PC-9 (cell line): ENCODE measurements at regions of chr6 and their contacts with region 1.

Region 1: GRCh38 chr6:57316581-57317059 is 810 bp upstream of the PRIM2 start:
- DNase-seq: peak; percentile 84 to 85
- H3K4me3 ChIP-seq: peak overlapping the region; percentile 90
- H3K27ac ChIP-seq: no peak overlapping the region
- H3K4me1 ChIP-seq: peaks cover 22% of the 10 kb centered on the region
- H3K27me3 ChIP-seq: no peaks in the 10 kb centered on the region
- CTCF ChIP-seq: peak; percentile 92

Region 2: GRCh38 chr6:56359201-56359899 is 957.3 kb before region 1 on chr6:
- CTCF ChIA-PET with region 1: no interaction called
- POLR2A ChIA-PET with region 1: no interaction called
- intact Hi-C with region 1: loop called (anchors 2 kb)
- DNase-seq: peak; percentile 41 to 51
- H3K4me3 ChIP-seq: no peak overlapping the region
- H3K27ac ChIP-seq: no peak overlapping the region
- H3K4me1 ChIP-seq: 0 out of 2 replicates have a peak, but pooled peaks cover 2% of the 10 kb centered on the region
- H3K27me3 ChIP-seq: no peaks in the 10 kb centered on the region
- CTCF ChIP-seq: peak; percentile 88

Region 3: DNA sequence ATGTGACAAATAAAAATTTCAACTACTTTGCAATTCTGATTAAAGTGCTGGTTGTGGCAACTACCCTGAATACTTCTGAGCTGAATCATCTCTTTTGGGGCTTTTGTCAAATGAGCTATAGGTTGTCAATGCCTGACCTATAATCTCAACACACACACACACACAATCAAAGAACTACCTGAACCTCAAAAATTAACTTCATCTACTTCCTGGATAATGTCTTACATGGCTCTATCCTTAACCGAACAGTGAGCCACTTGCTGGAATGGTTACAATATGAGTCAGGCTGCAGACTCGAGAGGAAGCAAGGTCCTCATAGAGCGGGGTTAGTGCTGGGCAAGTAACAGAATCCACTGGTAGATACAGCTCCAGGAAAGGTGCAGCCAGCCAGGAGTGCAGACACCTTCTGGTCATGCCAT is 603.4 kb before region 1 on chr6:
- CTCF ChIA-PET with region 1: no interaction called
- POLR2A ChIA-PET with region 1: no interaction called
- intact Hi-C with region 1: loop called (anchors 10 kb)
- DNase-seq: peak; percentile 68 to 97
- H3K4me3 ChIP-seq: peak overlapping the region; percentile 37; the same call in 1 of the 2 replicates
- H3K27ac ChIP-seq: peak overlapping the region; percentile 85
- H3K4me1 ChIP-seq: peaks cover 67% of the 10 kb centered on the region
- H3K27me3 ChIP-seq: no peaks in the 10 kb centered on the region
- CTCF ChIP-seq: no peak

Region 4: GRCh38 chr6:56902641-56903464 is 413.8 kb before region 1 on chr6:
- CTCF ChIA-PET with region 1: interaction called, 11 read pairs
- POLR2A ChIA-PET with region 1: no interaction called
- intact Hi-C with region 1: loop called (anchors 1 kb)
- DNase-seq: no peak
- H3K4me3 ChIP-seq: no peak overlapping the region
- H3K27ac ChIP-seq: no peak overlapping the region
- H3K4me1 ChIP-seq: peaks cover 19% of the 10 kb centered on the region
- H3K27me3 ChIP-seq: no peaks in the 10 kb centered on the region
- CTCF ChIP-seq: peak; percentile 85

Region 5: DNA sequence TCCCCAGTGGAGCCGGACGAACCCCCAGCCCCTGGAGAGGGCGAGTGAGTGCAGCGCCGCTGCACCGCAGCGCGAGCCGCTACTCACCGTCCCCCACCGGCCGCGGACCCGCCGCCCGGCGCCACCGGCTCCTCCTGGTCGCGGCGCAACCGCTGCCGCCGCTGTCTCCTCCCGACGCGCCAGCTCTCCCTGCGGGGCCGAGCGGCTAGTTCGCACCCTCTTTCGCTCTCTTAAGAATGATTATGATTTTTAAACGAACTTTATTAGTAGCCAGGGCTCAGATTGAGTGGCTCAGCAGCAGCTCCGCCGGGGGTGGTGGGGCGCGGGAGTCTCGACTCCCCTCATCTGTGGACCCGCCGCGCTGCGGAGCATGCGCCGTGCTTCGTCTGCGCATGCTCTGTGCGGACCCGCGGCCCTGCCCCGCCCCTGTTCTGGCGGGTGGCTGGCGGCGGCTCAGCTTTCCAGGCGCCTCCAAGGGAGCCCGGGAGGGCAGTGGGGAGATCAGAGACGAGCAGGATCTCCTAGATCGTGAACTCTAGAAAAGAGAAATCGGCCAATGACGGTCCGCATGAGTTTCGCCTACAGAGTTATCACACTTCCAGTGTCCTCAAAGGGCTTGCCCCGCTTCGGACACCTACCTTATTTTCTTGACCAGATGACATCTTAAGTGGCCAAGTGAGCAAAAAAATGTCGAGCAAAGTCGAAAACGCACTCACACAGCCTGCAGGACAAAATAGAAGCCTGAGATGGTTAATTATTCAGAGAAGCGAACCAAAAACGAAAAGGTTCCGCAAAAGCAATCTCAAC is 94.5 kb before region 1 on chr6 and contains the start of gene RAB23:
- CTCF ChIA-PET with region 1: no interaction called
- POLR2A ChIA-PET with region 1: no interaction called
- intact Hi-C with region 1: loop called (anchors 1 kb)
- DNase-seq: peak; percentile 60 to 91
- H3K4me3 ChIP-seq: peak within 1 kb of the TSS; percentile 95
- H3K27ac ChIP-seq: no peak within 1 kb of the TSS
- H3K4me1 ChIP-seq: peaks cover 26% of the 10 kb centered on the region
- H3K27me3 ChIP-seq: no peaks in the 10 kb centered on the region
- CTCF ChIP-seq: no peak
- total RNA-seq, gene RAB23: 9.3 and 13.8 TPM in 2 replicates